Left colon (tissue), 2 donors: ENCODE measurements at regions of chr3 and their contacts with region 1.

Region 1: GRCh38 chr3:130892759-130893375 is 1.0 kb upstream of the ATP2C1 start:
- DNase-seq: peak; percentile 68 to 78
- ATAC-seq: peak; percentile 63

Region 2: DNA sequence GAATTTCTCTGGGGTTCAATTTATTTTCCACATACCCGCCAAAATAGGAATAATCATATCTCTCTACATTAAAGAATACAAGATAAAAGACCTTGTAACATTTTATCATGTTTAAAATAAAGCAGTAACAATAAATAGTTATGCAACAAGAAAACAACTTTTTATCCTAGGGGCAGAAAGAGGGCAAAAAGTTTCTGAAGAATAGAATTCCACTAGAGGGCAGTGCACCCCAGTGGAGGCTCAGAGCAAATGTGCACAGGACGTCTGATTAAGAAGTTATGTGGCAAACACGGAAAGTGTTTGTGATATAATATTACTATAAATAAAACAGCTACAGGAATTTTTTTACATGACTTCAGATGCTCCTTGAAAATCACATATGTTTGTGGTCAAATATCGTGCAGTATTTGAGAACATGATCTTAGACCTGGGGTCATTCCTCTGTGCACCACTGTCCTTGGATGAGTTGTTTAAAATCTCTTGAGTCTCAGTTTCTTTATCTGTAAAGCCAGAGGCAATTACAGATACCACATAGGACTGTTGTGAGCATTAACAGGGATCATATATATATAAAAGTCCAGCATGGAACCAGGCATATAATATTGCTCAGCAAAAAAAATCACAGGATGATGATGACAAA is 133.0 kb before region 1 on chr3:
- intact Hi-C with region 1: loop called in 1 of 2 experiments (anchors 2 kb)
- DNase-seq: peak in 1 of 2 donors; percentile 46
- ATAC-seq: peak; percentile 85

Region 3: DNA sequence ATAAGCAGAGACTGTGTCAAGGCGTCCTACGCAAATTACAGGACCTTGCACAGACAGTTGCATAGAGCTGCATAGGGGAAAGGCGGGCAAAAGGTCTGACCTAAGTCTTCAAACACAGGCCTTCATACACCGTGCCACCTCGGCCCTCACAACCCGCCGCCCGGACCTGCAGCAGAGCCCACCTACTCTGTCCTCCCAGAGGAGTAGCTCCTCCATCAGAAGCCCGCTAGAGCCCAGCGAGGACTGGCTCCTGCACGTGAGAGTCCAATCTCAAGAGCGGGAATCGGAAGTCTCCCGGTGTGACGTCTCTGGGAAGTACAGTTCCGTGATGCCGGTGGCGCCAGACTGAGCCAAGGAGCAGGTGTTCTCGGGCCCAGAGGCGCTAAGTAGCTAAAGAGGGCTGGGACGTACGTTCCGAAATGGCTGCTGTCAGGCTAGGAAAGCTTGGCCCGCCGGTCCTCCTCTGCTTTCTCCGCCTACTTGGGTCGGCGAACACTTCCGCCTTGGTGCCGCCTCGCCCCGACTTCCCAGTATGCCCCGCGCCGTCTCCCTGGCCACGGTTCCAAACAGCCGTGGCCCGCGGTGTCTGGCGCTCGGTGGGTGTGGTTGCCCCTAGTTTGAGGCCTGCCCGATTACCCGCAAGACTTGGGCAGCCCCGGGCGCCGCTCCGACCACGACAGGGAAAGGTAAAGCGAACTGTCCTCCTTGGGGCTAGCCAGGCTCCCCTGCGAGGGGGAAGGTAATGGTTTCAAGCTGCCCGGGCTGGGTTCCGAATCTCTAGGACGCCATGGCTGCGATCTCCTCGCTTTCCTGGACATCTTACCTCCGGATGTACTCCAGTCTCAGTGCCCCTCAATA is 133.7 kb after region 1 on chr3 and contains the starts of genes ASTE1 and NEK11:
- intact Hi-C with region 1: loop called in 1 of 2 experiments (anchors 10 kb)
- DNase-seq: peak; percentile 90 to 95
- ATAC-seq: peak; percentile 95
- total RNA-seq, gene ASTE1: 9.9 to 15.4 TPM
- total RNA-seq, gene NEK11: 3.6 to 5.3 TPM